ENCODE measurements at regions of chr10 and their contacts with region 1.

Region 1: GRCh38 chr10:102713814-102714620 is at the start of gene ARL3:
- DNase-seq: peak; percentile 98
- ATAC-seq: peak; percentile 89
- H3K4me3 ChIP-seq: peak within 1 kb of the TSS; percentile 79
- H3K27ac ChIP-seq: 0 out of 2 replicates have a peak within 1 kb of the TSS, but pooled peaks have one; percentile 34
- H3K4me1 ChIP-seq: peaks cover 18% of the 10 kb centered on the region
- H3K27me3 ChIP-seq: no peaks in the 10 kb centered on the region
- CTCF ChIP-seq: 0 out of 2 replicates have a peak, but pooled peaks have one; percentile 27
- total RNA-seq, gene ARL3: 2.5 and 2.8 TPM in 2 replicates

Region 2: GRCh38 chr10:102503281-102504220 is 210.5 kb before region 1 on chr10 and contains the start of gene SUFU:
- CTCF ChIA-PET with region 1: no interaction called
- POLR2A ChIA-PET with region 1: no interaction called
- intact Hi-C with region 1: loop called (anchors 5 kb)
- DNase-seq: peak; percentile 97
- ATAC-seq: peak; percentile 61
- H3K4me3 ChIP-seq: peak within 1 kb of the TSS; percentile 92
- H3K27ac ChIP-seq: no peak within 1 kb of the TSS
- H3K4me1 ChIP-seq: peaks cover 22% of the 10 kb centered on the region
- H3K27me3 ChIP-seq: no peaks in the 10 kb centered on the region
- CTCF ChIP-seq: peak; percentile 72
- total RNA-seq, gene SUFU: 2.7 and 4.4 TPM in 2 replicates

Region 3: DNA sequence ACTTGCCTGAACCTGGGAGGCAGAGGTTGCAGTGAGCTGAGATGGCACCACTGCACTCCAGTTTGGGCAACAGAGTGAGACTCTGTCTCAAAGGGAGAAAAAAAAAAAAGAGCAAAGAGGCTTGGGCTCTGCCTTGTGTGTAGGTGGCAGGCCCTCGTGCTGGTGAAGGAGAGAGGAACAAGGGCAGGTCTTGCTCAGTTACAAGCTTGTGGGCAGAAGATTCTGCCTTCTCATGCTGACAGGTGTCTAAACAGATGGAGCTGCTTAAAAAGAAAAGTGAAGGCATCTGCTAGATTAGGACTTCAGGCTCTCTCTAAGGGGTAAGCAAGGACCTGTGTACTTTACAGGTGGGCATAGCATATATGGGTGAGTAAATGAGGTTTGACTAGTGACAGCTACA is 135.2 kb before region 1 on chr10:
- CTCF ChIA-PET with region 1: no interaction called
- POLR2A ChIA-PET with region 1: no interaction called
- intact Hi-C with region 1: no loop called
- DNase-seq: no peak
- ATAC-seq: no peak
- H3K4me3 ChIP-seq: no peak overlapping the region
- H3K27ac ChIP-seq: no peak overlapping the region
- H3K4me1 ChIP-seq: no peaks in the 10 kb centered on the region
- H3K27me3 ChIP-seq: no peaks in the 10 kb centered on the region
- CTCF ChIP-seq: no peak

Region 4: GRCh38 chr10:102641880-102642735 is 71.9 kb before region 1 on chr10:
- CTCF ChIA-PET with region 1: no interaction called
- POLR2A ChIA-PET with region 1: interaction called, 4 read pairs
- intact Hi-C with region 1: loop called (anchors 2 kb)
- DNase-seq: peak; percentile 90
- ATAC-seq: peak; percentile 44
- H3K4me3 ChIP-seq: peak overlapping the region; percentile 92
- H3K27ac ChIP-seq: peak overlapping the region; percentile 37; the same call in 1 of the 2 replicates
- H3K4me1 ChIP-seq: no peaks in the 10 kb centered on the region; the same call in 1 of the 2 replicates
- H3K27me3 ChIP-seq: no peaks in the 10 kb centered on the region
- CTCF ChIP-seq: no peak

Region 5: GRCh38 chr10:102678842-102679289 is 35.2 kb before region 1 on chr10:
- CTCF ChIA-PET with region 1: no interaction called
- POLR2A ChIA-PET with region 1: interaction called, 3 read pairs
- intact Hi-C with region 1: loop called (anchors 5 kb)
- DNase-seq: peak; percentile 42
- ATAC-seq: peak; percentile 84
- H3K4me3 ChIP-seq: no peak overlapping the region
- H3K27ac ChIP-seq: no peak overlapping the region
- H3K4me1 ChIP-seq: peaks cover 3% of the 10 kb centered on the region; the same call in 1 of the 2 replicates
- H3K27me3 ChIP-seq: no peaks in the 10 kb centered on the region
- CTCF ChIP-seq: peak; percentile 72

Region 6: DNA sequence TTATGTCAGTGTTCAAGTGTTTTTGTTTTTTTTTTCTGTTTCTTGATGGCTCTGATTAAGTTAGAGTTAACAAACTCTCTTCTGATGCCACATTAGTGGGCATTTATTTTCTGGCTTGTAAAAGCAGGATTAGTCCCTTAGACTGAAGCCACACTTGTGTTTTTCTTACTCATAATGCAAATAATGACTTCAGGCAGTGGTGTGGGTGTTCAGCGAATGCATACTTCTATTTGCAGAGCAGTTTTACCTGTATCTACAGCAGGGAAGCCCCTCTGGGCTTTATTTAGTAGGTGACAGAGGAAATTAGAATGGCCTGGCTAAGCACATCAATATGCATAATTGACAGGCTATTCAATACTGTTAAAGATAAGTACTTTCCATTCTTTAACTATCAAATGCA is 284.0 kb after region 1 on chr10:
- CTCF ChIA-PET with region 1: no interaction called
- POLR2A ChIA-PET with region 1: no interaction called
- intact Hi-C with region 1: no loop called
- DNase-seq: peak; percentile 77
- ATAC-seq: peak; percentile 97
- H3K4me3 ChIP-seq: peak overlapping the region; percentile 32; the same call in 1 of the 2 replicates
- H3K27ac ChIP-seq: peak overlapping the region; percentile 55
- H3K4me1 ChIP-seq: peaks cover 20% of the 10 kb centered on the region
- H3K27me3 ChIP-seq: no peaks in the 10 kb centered on the region
- CTCF ChIP-seq: no peak

Region 7: GRCh38 chr10:103102195-103102594 is 388.2 kb after region 1 on chr10:
- CTCF ChIA-PET with region 1: no interaction called
- POLR2A ChIA-PET with region 1: interaction called, 17 read pairs
- intact Hi-C with region 1: no loop called
- DNase-seq: no peak
- ATAC-seq: no peak
- H3K4me3 ChIP-seq: no peak overlapping the region
- H3K27ac ChIP-seq: no peak overlapping the region
- H3K4me1 ChIP-seq: peaks cover 35% of the 10 kb centered on the region
- H3K27me3 ChIP-seq: no peaks in the 10 kb centered on the region
- CTCF ChIP-seq: no peak